ENCODE measurements at regions of chr11 and their contacts with region 1.

Region 1: GRCh38 chr11:111878849-111879636 is at the starts of genes CFAP68 and FDXACB1:
- DNase-seq: peak; percentile 98
- H3K4me3 ChIP-seq: peak within 1 kb of the TSS; percentile 47 to 55
- H3K27ac ChIP-seq: peak within 1 kb of the TSS; percentile 97
- H3K4me1 ChIP-seq: no peaks in the 10 kb centered on the region
- H3K27me3 ChIP-seq: no peaks in the 10 kb centered on the region
- CTCF ChIP-seq: peak; percentile 93 to 100 (median 97)
- POLR2A ChIP-seq: peak; percentile 30
- total RNA-seq, gene CFAP68: 42.2 to 46.2 TPM
- total RNA-seq, gene FDXACB1: 2.7 to 7.6 TPM

Region 2: GRCh38 chr11:111718436-111718835 is 160.6 kb before region 1 on chr11:
- intact Hi-C with region 1: no loop called
- DNase-seq: peak; percentile 79
- H3K4me3 ChIP-seq: no peak overlapping the region
- H3K27ac ChIP-seq: peak overlapping the region; percentile 32 to 56
- H3K4me1 ChIP-seq: peaks cover 4% of the 10 kb centered on the region
- H3K27me3 ChIP-seq: no peaks in the 10 kb centered on the region
- CTCF ChIP-seq: no peak
- POLR2A ChIP-seq: peak; percentile 24

Region 3: DNA sequence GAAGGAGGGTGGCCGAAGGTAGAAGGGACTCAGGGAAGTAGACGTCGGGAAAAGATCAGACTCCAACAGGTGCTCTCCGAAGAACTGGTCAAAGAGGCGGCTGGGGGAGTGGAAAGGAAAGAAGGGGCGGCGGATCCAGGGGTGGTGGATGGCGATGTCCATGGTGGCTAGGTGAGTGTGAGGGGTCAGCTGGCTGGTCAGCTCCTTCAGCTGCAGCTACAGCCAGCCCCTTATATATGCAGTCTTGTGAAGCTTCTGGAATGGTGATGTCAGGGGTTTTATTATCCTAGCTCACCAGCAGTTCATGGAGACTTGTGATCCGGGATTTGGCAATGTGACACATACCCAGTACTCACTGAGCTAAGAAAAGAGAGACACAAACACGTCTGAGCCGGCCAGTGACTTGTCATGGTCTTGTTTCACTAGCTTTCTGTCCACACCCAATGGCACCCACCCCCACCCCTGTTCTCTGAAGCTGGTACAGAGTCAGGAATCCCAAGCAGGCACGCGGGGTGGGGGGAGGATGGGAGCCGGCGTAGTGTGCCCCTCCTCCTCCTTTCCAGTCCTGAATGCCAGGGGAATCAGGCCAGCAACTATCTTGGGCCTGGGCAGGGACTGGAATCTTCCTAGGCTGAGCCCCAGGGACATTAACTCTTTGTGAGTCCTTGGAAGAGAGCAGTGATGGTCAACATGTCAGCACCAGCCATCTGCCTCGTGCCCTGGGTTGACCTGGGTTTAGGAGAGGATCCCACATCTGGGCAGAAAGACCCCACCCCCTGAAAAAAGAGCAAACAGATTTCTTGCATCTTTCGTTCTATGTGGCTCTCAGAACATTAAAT is 32.7 kb after region 1 on chr11 and contains the start of gene CRYAB:
- intact Hi-C with region 1: loop called (anchors 1 kb)
- DNase-seq: peak; percentile 96
- H3K4me3 ChIP-seq: peak within 1 kb of the TSS; percentile 31 to 33
- H3K27ac ChIP-seq: peak within 1 kb of the TSS; percentile 92 to 95
- H3K4me1 ChIP-seq: peaks cover 15% of the 10 kb centered on the region
- H3K27me3 ChIP-seq: no peaks in the 10 kb centered on the region
- CTCF ChIP-seq: no peak
- POLR2A ChIP-seq: peak; percentile 57
- total RNA-seq, gene CRYAB: 59.0 to 80.1 TPM

Region 4: DNA sequence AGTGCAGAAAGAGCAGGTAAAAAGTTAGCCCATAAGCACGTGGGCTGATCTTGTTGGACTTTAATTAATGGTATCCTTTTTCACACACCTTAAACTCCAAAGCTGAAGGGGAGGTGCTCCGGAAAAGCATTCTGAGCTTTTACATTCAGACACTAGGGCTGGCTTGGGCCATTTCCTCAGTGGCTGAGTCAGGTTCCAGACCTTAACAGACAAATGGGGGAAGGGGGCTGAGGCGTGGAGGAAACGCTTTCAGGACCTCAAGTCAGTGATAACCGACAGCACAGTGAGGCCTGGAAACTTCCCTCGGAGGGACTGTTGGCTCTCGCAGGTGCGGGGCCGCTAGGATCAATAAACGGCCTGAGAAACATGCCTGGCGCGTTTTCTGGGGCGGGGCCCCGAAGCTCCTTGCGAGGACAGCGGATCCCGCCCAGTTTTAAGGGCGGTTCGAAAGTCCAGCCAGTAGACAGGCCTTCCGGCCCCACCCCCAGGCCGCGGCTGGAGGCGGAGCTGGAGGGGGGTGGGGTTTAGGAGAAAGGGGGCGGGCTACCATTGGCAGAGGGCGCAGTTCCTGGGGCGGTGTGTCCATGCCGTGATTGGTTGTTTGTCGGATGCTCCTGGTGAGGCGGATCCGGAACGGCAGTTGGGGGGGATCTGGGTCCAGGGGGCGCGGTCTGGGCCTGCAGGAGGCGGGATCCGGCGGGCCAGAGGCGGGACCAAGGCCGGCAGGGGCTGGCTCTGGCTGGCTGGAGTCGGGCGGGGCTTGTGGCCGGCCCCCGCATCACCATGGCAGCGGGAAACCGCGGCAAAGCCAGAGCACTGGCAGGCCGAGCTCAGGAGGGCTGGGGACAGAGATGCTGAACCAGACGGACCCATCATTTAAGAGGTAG is 47.7 kb after region 1 on chr11:
- intact Hi-C with region 1: loop called (anchors 5 kb)
- DNase-seq: peak; percentile 96
- H3K4me3 ChIP-seq: peak overlapping the region; percentile 15 to 22
- H3K27ac ChIP-seq: peak overlapping the region; percentile 89 to 97
- H3K4me1 ChIP-seq: peaks cover 8% of the 10 kb centered on the region
- H3K27me3 ChIP-seq: no peaks in the 10 kb centered on the region
- CTCF ChIP-seq: peak in 2 of 4 experiments; percentile 17 to 27
- POLR2A ChIP-seq: peak; percentile 79

Region 5: DNA sequence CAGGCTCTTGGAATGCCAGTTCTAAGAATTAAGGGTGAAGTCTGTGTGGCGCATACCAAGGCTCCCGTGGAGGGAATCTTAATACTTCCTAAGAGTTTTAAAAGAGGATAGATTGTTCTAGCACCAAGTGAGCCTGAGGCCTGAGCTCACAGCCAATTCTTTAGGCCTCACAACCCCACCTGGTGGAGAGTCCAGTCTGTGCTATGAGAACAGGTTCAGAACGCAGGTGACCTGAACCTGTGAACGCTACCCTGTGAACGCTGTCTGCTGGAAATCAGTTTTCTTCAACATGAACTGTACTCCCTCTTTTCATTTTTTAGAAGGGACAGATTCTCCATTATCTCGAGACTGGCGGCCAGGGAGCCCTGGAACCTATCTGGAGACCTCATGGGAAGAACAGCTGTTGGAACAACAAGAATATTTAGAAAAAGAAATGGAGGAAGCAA is 103.0 kb after region 1 on chr11:
- intact Hi-C with region 1: loop called (anchors 2 kb)
- DNase-seq: peak; percentile 87
- H3K4me3 ChIP-seq: peak overlapping the region; percentile 17 to 28
- H3K27ac ChIP-seq: peak overlapping the region; percentile 84 to 85
- H3K4me1 ChIP-seq: no peaks in the 10 kb centered on the region
- H3K27me3 ChIP-seq: no peaks in the 10 kb centered on the region
- CTCF ChIP-seq: peak; percentile 55 to 93 (median 84)
- POLR2A ChIP-seq: no peak

Region 6: DNA sequence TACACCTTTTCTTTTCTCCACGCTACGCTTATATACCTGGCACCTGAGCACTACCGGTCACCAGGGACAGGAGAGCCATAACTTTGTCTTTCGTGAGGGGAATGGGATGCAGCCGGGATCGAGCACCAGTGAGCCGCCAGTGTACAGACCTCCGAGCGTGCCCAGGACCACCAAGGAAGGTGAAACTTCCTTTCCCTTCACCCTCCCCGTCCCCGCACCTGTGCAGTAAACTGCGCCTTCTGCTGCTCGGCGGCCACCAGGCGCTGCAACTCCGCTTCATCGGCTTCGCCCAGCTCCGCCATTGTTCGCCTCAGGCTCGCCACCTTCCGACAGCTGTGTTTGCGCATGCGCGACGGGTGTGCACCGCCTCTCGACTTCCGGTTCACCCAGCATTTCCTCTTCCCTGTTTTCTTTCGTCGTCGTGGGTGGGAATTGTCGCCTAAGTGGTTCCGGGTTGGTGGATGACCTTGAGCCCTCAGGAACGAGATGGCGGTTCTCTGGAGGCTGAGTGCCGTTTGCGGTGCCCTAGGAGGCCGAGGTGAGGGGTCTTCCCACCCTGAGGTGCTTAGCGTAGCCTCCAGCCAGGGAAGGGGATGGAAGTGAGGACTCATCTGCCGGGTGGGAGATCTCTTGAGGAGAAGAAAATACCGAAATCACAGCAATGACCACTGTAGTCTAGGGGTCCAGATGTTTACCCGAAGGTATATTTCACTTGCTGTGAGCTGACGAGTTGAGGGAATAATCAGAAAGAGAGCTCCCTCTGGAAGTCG is 207.6 kb after region 1 on chr11 and contains the starts of genes SDHD and TIMM8B:
- intact Hi-C with region 1: loop called (anchors 5 kb)
- DNase-seq: peak; percentile 93
- H3K4me3 ChIP-seq: peak within 1 kb of the TSS; percentile 61 to 65
- H3K27ac ChIP-seq: peak within 1 kb of the TSS; percentile 64 to 78
- H3K4me1 ChIP-seq: no peaks in the 10 kb centered on the region
- H3K27me3 ChIP-seq: no peaks in the 10 kb centered on the region
- CTCF ChIP-seq: peak in 3 of 4 experiments; percentile 13 to 50 (median 50)
- POLR2A ChIP-seq: peak; percentile 53
- total RNA-seq, gene SDHD: 91.6 to 107 TPM
- total RNA-seq, gene TIMM8B: 43.1 to 49.5 TPM

Measured in prostate gland (tissue), 2 donors.